Dendritic cell treated with granulocyte-macrophage colony-stimulating factor and Interleukin-4, amounts not matched to agents 40 ng/mL and 50 ng/mL, for 4 days (primary cell): ENCODE measurements at regions of chr6 and their contacts with region 1.

Region 1: GRCh38 chr6:132530293-132530974 is 7.6 kb upstream of the TAAR9 start:
- H3K4me3 Mint-ChIP-seq: peak overlapping the region; percentile 28
- H3K27ac Mint-ChIP-seq: no peak overlapping the region
- H3K4me1 Mint-ChIP-seq: peaks cover 9% of the 10 kb centered on the region
- H3K27me3 Mint-ChIP-seq: peaks cover 5% of the 10 kb centered on the region

Region 2: DNA sequence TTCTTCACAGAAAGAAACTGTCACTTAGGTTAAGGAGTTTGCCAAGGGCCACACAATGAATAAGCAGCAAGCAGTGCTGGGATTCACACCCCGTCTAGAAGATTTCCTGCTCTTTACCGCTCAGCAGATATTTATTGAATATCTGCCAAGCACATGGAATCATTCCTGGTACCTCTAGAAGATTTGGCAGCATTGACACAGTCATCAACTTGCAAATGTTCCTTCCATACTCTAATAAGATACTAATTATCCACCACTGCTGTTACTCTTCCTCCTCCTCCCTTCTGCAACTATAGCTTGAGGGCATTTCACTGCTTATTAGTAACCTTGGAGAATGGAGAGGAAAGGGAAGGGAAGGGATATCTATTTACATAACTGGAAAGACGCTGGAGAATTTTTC is 142.1 kb before region 1 on chr6:
- intact Hi-C with region 1: no loop called
- H3K4me3 Mint-ChIP-seq: no peak overlapping the region
- H3K27ac Mint-ChIP-seq: no peak overlapping the region
- H3K4me1 Mint-ChIP-seq: no peaks in the 10 kb centered on the region
- H3K27me3 Mint-ChIP-seq: peaks cover 10% of the 10 kb centered on the region

Region 3: DNA sequence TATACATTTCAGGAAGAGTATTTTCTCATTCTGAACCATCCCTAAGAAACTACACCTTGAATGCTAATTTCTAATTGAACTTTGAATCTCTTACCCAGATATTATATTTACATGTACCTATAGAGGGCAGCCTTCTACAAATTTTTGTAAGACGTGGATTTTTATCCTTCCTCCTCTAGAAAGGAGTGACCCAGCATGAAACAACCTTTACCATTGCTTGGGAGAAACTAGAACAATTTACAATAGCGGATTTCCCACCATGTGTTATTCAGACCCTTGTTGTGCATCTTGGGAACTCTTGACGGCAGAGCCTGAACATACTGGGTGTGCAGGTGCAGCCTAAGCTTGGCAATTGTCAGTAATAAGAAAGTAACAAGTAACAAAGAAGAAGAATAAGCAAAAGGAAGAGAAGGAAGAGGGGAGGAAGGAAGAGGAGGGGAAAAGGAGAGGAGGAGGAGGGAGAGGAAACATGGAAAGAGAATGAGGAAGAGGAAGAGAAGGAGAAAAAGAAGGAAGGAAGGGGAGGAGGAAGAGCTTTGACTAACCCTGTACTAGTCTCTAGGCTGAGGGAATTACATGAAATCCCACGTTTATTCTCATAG is 139.4 kb after region 1 on chr6:
- intact Hi-C with region 1: loop called (anchors 5 kb)
- H3K4me3 Mint-ChIP-seq: no peak overlapping the region
- H3K27ac Mint-ChIP-seq: peak overlapping the region; percentile 60
- H3K4me1 Mint-ChIP-seq: peaks cover 10% of the 10 kb centered on the region
- H3K27me3 Mint-ChIP-seq: no peaks in the 10 kb centered on the region

Region 4: DNA sequence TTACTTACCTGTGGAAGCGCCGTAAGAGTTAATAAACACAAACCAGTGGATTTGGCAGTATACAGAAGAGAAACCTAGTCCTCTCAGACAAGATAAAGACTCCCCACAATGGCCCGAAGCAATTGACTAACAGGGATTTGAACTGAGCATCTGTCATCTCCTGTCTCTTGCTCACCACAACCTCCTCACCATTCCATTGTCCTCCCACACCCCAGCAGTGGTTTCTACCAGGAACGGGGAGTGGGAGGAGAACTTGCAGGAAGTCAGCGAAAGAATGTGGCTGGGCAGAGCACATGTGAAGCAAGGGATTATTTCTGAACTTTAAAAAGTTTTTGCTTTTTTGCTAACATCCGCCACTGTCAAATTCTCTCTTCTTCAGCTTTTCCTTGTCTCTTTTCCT is 153.1 kb after region 1 on chr6:
- intact Hi-C with region 1: no loop called
- H3K4me3 Mint-ChIP-seq: no peak overlapping the region
- H3K27ac Mint-ChIP-seq: no peak overlapping the region
- H3K4me1 Mint-ChIP-seq: peaks cover 27% of the 10 kb centered on the region
- H3K27me3 Mint-ChIP-seq: no peaks in the 10 kb centered on the region